Activated naive CD4-positive, alpha-beta T cell treated with anti-CD3 and anti-CD28 coated beads, Interleukin-2, amount 10 ng/mL, durations not matched to agents 7 days and 5 days (primary cell): ENCODE measurements at regions of chr9 and their contacts with region 1.

Region 1: DNA sequence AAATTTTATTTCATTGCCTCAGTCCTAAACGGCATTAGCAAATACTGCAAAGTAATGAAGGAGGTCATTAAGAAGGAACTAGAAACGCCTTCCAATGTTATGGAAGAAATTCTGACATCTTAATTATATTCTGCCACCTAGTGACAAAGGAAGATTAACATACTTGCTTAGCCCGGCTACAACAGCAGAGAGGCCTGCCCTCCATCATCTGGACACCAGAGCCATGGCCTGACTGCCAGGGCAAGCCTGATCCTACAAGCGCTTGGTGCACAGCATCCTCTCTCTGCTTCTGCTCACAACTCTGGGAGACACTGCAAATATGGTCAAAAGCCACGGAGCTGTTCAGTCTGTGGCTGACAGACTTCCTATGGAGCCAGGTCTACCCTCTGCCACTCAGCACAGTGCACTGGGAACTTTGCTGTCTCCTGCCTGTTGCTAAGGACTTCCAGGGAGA is 87.3 kb upstream of the SLC44A1 start:
- DNase-seq: peak; percentile 27
- H3K4me3 Mint-ChIP-seq: no peak overlapping the region
- H3K27ac Mint-ChIP-seq: no peak overlapping the region
- H3K4me1 Mint-ChIP-seq: peaks cover 2% of the 10 kb centered on the region
- H3K27me3 Mint-ChIP-seq: peaks cover 25% of the 10 kb centered on the region

Region 2: DNA sequence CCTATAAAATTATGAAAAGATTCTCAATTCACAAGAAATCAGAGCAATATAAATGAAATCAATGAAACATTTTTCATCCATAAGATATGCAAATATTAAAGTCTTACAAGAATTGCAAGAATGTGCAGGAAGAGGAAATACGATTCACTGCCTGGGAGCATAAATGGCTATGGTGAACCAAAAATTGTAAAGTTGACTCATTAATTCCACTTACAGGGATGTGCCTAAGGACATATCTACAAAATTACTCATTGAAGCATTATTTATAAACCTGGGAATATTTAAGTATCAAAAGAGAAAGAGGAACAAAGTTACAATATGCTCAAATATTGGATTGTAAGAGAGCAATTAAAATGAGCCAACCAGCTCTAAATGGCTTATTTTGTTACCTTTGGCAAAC is 416.5 kb before region 1 on chr9:
- CTCF ChIA-PET with region 1: no interaction called
- DNase-seq: no peak
- H3K4me3 Mint-ChIP-seq: no peak overlapping the region
- H3K27ac Mint-ChIP-seq: no peak overlapping the region
- H3K4me1 Mint-ChIP-seq: peaks cover 2% of the 10 kb centered on the region
- H3K27me3 Mint-ChIP-seq: no peaks in the 10 kb centered on the region

Region 3: DNA sequence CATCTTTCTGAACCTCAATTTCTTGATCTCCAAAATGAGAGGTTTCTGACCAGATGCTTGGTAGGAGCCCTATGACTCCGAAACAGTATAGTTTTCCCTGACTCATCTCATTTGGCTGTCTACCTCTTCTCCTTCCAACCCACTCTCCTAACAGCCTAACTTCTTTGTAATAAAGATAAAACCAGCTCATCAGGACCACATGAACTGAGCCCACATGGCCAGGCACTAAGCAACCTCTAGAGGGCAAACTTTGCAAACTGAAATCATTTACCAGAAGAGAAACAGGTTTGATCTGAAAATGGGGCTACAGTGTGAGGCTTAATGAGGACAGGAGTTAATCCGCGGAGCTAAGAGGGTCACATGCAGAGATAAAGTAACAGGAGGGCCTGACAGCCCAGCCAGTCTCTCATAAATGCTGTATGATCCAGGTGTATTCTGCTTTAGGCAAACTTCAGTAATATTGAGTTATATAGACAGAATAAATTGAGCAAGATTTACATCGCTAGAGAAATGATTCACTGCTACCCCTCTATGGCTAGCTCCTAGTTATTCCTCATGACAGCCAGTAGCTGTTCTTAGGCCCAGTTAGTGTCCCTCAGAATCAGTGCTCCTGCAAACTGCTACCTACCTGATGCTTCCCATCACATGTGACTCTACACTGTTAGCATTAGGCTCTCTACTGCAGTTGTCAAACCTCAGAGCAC is 293.8 kb before region 1 on chr9:
- CTCF ChIA-PET with region 1: interaction called, 82 read pairs
- DNase-seq: peak; percentile 58
- H3K4me3 Mint-ChIP-seq: no peak overlapping the region
- H3K27ac Mint-ChIP-seq: no peak overlapping the region
- H3K4me1 Mint-ChIP-seq: no peaks in the 10 kb centered on the region
- H3K27me3 Mint-ChIP-seq: no peaks in the 10 kb centered on the region

Region 4: GRCh38 chr9:104927912-104928740 is 229.0 kb before region 1 on chr9 and contains the start of gene ABCA1:
- CTCF ChIA-PET with region 1: interaction called, 13 read pairs
- DNase-seq: peak; percentile 80
- H3K4me3 Mint-ChIP-seq: peak within 1 kb of the TSS; percentile 74
- H3K27ac Mint-ChIP-seq: no peak within 1 kb of the TSS
- H3K4me1 Mint-ChIP-seq: peaks cover 21% of the 10 kb centered on the region
- H3K27me3 Mint-ChIP-seq: peaks cover 61% of the 10 kb centered on the region

Region 5: DNA sequence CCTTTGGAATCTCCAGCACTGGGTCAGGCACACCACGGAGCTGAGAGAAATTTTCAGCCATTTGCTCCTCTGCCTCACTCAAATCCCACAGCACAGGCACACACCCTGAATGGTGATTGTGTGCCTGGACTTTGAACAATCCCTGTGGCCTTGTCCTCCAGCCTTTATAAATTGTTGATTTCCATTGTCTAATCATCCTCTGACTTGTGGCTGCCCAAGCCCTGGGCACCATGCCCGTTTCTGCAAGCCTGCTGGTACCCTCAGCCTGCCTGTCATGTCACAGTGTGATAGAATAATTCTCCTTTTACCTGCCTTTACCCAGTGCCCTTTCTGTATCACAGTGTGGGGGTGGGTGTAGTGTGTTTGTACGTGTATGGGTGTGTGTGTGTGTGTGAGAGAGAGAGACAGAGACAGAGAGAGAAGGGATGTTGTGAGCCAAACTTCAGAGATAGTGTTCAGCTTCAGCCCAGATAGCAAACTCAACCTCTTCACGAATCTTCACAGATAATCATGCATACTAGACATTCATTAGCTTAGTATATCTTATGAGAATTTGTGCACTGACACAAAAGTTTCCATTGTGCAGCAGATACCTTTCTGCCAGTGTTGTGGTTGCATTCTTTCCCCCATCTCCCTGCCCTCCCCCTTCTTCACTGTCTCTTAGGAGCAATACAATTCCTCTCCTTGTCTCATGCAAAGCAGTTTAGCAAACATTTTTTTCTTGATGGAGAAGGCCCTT is 59.5 kb after region 1 on chr9:
- CTCF ChIA-PET with region 1: no interaction called
- DNase-seq: no peak
- H3K4me3 Mint-ChIP-seq: no peak overlapping the region
- H3K27ac Mint-ChIP-seq: no peak overlapping the region
- H3K4me1 Mint-ChIP-seq: no peaks in the 10 kb centered on the region
- H3K27me3 Mint-ChIP-seq: no peaks in the 10 kb centered on the region